ENCODE measurements at regions of chr19 and their contacts with region 1.

Region 1: DNA sequence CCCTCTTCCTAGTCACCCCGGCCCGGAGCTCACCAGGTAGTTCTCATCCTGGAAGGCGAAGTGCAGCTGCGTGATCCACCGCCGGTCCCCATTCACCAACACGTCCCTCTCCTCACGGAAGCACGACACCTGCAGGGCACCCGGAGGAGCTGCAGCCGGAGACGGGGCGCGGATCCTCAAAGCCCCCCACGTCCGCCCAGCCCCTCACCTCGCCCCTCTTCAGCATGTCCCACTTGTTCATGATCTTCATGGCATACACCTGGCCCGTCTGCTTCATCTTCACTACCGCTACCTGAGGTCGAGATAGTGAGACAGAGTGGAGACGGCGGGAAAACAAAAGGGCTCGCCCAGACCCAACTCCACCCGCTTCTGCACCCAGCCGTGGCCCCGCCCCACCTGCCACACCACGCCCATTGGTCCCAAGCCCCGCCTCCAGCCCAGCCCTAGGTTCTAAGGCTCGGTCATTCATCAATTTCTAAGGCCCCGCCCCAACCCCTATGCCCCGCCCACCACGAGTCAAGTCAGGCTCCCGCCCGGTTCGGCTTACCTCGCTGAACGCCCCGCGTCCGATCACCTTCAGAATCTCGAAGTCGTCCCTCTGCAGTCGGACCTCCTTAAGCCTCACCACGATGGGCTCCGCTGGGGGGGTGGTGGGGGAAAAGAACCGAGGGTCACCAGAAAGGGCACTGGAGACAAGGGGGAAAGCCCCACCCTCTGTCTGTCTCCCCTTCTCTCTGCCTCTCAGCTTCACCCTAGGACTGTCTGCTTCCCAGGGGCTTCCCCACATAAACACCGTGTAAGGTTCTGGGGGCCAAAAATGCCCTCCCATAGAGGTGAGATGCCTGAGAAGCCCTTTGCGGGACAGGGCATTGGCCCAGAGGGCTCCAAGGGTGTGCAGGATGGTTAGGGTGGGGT is 2.8 kb downstream of the DMPK start:
- DNase-seq: peak; percentile 84
- ATAC-seq: peak; percentile 96
- H3K4me3 Mint-ChIP-seq: peak overlapping the region; percentile 82
- H3K27ac Mint-ChIP-seq: peak overlapping the region; percentile 9
- H3K4me1 Mint-ChIP-seq: peaks cover 26% of the 10 kb centered on the region
- H3K27me3 Mint-ChIP-seq: peaks cover 4% of the 10 kb centered on the region
- CTCF ChIP-seq: no peak

Region 2: DNA sequence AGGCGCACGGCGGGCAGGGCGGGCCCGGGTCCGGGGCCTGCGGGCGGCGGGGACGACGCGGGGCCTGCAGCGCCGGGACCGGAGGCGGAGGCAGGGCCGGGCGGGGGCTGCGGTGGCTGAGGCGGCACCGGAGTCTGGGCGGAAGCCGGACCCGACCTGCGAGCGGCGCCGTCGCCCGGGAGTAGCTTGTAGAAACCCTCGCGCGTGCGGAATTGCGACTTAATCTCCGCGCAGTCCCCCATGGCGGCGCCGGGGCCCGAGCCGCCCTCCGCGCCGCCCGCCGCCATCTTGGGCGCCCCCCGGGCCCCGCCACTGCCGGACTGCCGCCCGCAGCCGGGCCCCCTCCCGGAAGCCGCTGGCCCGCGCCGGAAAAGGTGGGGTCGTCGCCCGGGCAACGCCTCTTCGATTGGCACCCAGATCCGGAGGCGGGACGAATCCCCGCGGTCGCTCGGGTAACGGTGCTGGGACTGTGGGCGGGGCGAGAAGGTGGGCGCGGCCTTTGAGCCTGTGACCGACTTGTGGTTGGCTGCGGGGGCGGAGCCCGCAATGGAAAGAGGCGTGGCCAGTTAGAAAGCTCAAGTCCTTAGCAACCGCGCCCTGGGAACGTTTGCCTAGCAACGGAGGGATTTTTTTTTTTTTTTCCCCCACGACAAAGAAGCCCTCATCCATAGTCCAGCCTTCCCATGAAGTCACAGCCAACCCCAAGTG is 13.1 kb after region 1 on chr19 and contains the start of gene DMWD:
- CTCF ChIA-PET with region 1: interaction called, 172 read pairs
- POLR2A ChIA-PET with region 1: interaction called, 4 read pairs
- intact Hi-C with region 1: loop called (anchors 1 kb)
- DNase-seq: peak; percentile 100
- ATAC-seq: peak; percentile 96
- H3K4me3 Mint-ChIP-seq: peak within 1 kb of the TSS; percentile 88
- H3K27ac Mint-ChIP-seq: peak within 1 kb of the TSS; percentile 76
- H3K4me1 Mint-ChIP-seq: peaks cover 27% of the 10 kb centered on the region
- H3K27me3 Mint-ChIP-seq: peaks cover 5% of the 10 kb centered on the region
- CTCF ChIP-seq: no peak
- total RNA-seq, gene DMWD: 64.7 and 77.3 TPM in 2 replicates